Right ventricle myocardium inferior (tissue), 1 donor: ENCODE measurements at regions of chr22 and their contacts with region 1.

Region 1: DNA sequence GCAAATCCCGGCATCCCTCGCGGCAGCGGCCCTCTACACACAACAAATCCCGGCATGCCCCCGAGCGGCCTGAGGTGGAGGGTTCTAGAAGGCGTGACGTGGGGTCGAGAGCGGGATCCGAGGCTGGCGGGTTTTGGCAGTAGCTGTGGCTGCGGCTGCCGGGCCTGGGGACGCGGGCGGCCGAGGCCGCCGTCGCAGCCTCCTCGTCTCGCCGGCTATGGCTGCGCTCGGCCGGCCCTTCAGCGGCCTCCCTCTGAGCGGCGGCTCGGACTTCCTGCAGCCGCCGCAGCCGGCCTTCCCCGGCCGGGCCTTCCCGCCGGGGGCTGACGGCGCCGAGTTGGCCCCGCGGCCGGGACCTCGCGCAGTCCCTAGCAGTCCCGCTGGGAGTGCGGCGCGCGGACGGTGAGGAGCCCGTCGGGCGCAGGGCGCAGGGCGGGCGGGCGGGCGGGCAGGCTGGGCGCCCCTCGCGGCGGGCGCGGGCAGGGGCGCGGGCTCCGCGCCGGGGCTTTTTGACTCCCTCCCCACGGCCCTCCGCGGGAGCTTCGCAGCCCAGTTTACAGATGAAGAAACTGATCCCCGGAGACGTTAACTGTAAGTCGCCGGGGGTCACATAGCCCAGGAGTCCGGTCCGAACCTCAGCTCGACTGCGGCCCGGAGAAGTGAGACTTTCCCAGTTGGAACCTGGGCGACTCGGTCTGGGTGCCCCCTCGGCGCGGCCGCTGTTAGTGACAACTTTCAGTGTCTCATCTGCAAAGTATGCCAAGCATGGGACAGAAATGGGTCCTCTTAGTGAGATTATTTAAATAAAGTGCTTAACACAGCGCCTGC is at the start of gene CCDC117:
- DNase-seq: peak; percentile 98
- ATAC-seq: peak; percentile 98
- total RNA-seq, gene CCDC117: 11.4 TPM

Region 2: GRCh38 chr22:28728621-28729313 is 44.1 kb before region 1 on chr22:
- intact Hi-C with region 1: no loop called
- DNase-seq: no peak
- ATAC-seq: no peak

Region 3: DNA sequence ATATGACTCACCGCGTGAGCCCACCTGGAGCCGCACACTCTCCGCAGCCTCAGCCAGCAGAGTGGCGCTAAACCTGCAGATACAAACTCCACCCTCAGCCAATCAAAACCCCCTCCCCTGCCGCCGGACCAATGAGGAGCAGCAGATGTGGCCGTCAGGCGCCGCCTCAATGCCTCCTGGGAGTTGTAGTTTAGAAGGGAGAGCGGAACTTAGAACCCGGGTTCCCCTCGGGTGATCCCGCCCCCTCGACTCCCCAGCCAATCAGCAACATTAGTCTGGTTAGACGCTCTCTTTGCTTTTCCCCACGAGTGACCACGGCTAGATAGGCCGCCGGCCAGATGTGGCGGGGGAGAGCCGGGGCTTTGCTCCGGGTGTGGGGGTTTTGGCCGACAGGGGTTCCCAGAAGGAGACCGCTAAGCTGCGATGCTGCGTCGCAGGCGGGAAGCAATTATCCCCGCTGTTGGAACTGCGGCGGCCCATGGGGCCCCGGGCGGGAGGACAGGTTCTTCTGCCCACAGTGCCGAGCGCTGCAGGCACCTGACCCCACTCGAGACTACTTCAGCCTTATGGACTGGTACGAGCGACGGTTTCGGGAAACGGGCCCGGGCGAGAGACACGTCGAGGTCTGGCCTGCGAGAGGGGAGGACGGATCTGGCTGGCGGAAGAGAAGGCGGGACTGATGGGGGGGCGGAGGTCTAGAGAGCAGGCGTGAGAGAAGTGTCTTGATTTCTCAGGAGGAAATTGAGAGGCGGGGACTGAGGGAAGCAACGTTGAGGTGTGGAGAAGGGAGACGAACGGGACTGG is 30.9 kb before region 1 on chr22 and contains the starts of genes CHEK2 and HSCB:
- intact Hi-C with region 1: loop called (anchors 2 kb)
- DNase-seq: peak; percentile 99
- ATAC-seq: peak; percentile 98
- total RNA-seq, gene CHEK2: 1.9 TPM
- total RNA-seq, gene HSCB: 9.6 TPM

Region 4: DNA sequence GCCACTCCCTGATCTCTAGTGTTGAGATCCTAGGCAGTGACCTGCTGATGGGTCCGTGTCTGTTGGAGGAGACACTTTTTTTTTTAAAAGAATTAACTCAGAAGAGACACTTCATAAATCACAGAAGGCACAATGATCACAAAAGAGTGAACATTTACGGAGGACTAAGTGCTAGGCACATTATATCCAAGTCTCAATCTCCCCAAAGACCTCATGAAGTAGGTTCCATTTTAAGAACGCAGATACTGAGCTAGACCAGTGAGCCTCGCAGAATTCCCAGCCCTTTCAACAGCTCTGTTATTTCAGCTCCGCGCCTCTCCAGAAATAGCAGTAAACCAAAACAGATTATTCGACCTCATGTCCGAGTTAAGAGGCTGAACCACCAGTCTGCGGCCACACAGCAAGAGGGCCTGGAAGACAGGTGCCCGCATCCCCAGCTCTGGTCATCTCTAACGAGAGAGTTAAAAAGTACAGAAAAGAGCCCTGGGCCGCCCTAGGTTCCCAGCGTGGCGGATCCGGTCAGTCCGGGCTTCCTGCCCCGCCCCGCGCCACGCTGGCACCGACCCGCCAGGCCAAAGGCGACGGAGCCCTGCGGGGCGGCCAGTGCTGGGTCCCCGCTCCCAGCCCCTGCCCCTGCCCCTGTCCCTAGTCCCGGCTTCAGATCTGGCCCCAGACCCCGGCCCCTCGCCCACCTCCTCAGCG is 26.9 kb after region 1 on chr22:
- intact Hi-C with region 1: loop called (anchors 2 kb)
- DNase-seq: peak; percentile 88
- ATAC-seq: peak; percentile 83